Endothelial cell of umbilical vein (primary cell): ENCODE measurements at regions of chr1 and their contacts with region 1.

Region 1: DNA sequence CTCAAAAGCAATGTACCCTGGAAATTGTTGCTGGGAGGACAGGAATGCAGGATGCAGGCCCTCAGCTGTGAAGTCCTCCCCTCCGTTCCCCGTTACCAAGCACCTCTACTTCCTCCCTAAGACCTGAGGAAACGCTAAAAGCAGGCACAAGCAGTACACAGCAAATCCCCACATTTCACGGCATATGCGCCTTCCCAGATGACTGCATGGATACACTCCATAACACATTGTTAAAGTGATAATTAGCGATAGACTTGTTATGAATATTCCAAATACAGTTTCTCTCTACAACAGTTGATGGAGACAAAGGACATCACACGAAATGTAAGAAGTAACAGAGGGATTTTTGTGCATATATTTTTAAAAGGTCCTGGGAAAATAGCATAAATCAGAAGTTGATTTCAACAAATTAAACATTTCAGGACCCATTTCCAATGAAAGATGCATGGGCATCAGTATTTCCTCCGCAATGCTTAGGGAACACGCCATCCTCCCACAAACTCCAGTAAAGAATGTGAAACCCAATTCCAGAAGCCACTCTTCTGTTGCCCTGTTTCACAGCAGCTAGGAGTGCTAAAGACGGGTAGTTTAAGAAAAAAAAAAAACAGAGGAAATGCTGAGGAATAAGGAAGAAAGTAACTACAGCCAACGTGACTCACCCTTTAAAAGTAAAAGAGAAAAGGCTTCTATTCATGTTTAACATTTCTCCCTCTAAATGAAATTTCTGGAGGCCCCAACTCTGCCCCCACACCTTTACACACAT is 75.5 kb downstream of the HIVEP3 start:
- DNase-seq: peak; percentile 52
- H3K4me3 ChIP-seq: no peak overlapping the region
- H3K27ac ChIP-seq: no peak overlapping the region
- H3K4me1 ChIP-seq: peaks cover 43% of the 10 kb centered on the region
- H3K27me3 ChIP-seq: no peaks in the 10 kb centered on the region
- CTCF ChIP-seq: no peak
- POLR2A ChIP-seq: no peak

Region 2: DNA sequence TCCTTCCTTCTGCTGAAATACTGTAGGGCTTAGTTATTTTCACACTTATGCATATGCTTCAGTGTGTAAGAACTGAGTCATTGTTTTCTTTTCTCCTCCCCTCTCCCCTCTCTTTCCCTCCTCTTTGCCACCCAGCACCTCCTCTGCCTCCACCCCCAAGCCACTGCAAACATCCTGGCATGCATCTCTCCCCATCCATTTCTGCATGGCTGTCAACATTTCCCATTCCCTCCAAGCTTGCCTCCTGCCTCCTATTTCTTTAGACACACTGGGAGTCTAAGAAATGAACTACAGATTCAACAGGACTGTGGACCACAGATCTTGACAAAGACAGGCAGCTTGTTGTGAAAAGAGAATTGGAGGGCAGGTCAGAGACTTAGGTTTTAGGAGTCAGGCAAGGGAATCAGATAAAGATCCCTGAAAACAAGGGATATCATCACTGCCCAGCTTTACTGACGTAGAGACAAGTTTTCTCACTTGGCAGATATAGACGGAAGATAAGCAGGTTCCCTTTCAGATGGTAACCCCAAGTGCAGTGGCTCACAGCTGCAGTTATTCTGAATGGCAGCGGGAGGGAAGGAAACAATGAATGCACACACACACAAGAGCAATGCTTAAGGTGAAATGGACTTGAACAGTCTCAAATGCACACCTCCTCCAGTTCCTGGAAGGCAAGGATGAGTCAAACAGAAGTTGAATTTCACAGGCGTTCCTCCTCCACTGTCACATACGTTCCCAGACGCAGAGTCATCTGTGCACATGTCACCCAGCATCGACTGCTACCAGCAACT is 19.4 kb after region 1 on chr1:
- CTCF ChIA-PET with region 1: no interaction called
- POLR2A ChIA-PET with region 1: no interaction called
- dilution Hi-C with region 1: no loop called
- intact Hi-C with region 1: loop called (anchors 2 kb)
- DNase-seq: peak; percentile 76
- H3K4me3 ChIP-seq: no peak overlapping the region
- H3K27ac ChIP-seq: peak overlapping the region; percentile 55
- H3K4me1 ChIP-seq: peaks cover 24% of the 10 kb centered on the region
- H3K27me3 ChIP-seq: no peaks in the 10 kb centered on the region
- CTCF ChIP-seq: no peak
- POLR2A ChIP-seq: no peak

Region 3: GRCh38 chr1:41891199-41891896 is 48.2 kb after region 1 on chr1:
- CTCF ChIA-PET with region 1: interaction called, 12 read pairs
- POLR2A ChIA-PET with region 1: no interaction called
- dilution Hi-C with region 1: no loop called
- intact Hi-C with region 1: no loop called
- DNase-seq: peak; percentile 62
- H3K4me3 ChIP-seq: peak overlapping the region in 2 of 3 experiments; percentile 4 to 5
- H3K27ac ChIP-seq: peak overlapping the region; percentile 6
- H3K4me1 ChIP-seq: peaks cover 17% of the 10 kb centered on the region
- H3K27me3 ChIP-seq: no peaks in the 10 kb centered on the region
- CTCF ChIP-seq: peak; percentile 8 to 10
- POLR2A ChIP-seq: no peak

Region 4: DNA sequence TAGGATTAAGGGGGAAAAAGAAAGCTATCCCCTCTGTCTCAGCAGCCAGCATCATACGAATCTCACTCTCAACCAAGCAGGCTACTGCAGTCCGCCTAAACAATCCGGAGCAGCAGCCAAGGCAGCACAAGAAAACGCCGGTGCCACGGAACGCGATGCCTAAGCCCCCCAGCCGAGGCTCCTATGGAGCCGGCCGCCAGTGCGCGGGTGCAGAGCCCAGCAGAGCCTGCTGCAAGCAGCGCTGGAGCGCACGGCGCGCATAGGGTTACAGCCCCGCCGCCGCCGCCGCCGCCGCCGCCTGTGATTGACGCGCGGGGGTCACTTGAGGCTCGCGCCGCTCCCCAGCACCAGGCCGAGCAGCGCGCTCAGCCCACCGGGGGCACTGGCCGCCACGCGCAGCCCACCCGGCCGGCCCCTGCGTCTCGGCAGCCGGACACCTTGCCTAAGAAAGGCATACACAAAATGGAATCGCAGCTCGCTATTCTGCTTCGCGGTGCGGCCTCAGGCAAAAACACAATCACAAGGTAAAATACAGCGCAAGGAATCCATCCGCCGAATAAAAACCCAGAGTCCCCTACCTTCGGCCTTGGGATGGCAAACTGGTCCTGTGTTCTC is 74.8 kb after region 1 on chr1:
- CTCF ChIA-PET with region 1: interaction called, 3 read pairs
- POLR2A ChIA-PET with region 1: no interaction called
- dilution Hi-C with region 1: no loop called
- intact Hi-C with region 1: loop called (anchors 1 kb)
- DNase-seq: peak; percentile 57
- H3K4me3 ChIP-seq: peak overlapping the region; percentile 21 to 58 (median 45)
- H3K27ac ChIP-seq: no peak overlapping the region
- H3K4me1 ChIP-seq: peaks cover 14% of the 10 kb centered on the region
- H3K27me3 ChIP-seq: no peaks in the 10 kb centered on the region
- CTCF ChIP-seq: no peak
- POLR2A ChIP-seq: no peak

Region 5: GRCh38 chr1:41955461-41956159 is 112.4 kb after region 1 on chr1:
- CTCF ChIA-PET with region 1: no interaction called
- POLR2A ChIA-PET with region 1: no interaction called
- dilution Hi-C with region 1: no loop called
- intact Hi-C with region 1: loop called (anchors 1 kb)
- DNase-seq: peak; percentile 84
- H3K4me3 ChIP-seq: peak overlapping the region in 1 of 3 experiments; percentile 13
- H3K27ac ChIP-seq: peak overlapping the region; percentile 94
- H3K4me1 ChIP-seq: peaks cover 35% of the 10 kb centered on the region
- H3K27me3 ChIP-seq: no peaks in the 10 kb centered on the region
- CTCF ChIP-seq: no peak
- POLR2A ChIP-seq: no peak